Naive thymus-derived CD4-positive, alpha-beta T cell (primary cell): ENCODE measurements at regions of chr11 and their contacts with region 1.

Region 1: DNA sequence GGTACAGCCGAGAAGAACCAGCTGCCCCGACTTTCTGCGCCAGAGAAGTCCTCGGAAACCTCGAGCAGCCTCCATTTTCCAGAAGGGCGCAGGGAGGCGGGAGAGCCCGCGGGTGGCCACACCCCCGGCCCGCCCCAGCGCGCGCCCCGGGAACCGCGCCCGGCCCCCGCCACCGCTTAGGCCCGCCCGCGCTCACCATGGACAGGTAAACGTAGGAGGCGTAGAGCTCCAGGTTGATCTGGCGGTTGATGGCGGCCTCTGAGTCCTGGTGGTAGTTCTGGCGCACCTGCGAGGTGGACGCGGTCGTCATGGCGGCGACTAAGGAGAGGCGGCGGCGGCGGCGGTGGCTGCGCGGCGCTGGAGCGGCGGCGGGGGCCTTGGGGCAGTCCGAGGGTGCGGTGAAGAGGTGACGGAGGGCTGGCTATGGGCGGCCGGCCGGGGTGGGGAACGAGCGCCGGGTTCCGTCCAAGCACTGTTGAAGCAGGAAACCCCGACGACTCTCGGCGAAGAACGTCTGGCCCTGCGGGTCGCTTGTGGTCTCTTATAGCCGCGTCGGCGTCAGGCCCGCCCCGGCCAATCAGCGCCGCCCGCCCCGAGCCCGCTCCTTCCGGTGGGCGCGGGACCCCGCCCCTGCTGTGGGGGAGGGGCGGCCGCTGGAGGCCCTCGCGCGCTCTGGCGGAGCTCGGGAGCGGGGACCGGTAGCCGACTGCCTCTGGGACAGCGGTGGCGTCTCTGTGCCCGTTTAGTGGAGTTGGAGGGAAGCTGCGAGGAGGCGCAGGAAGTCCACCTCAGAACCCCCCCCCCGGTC is at the start of gene FTH1:
- DNase-seq: peak; percentile 87 to 96 (median 92)
- ATAC-seq: peak; percentile 81
- H3K4me3 ChIP-seq: peak within 1 kb of the TSS; percentile 91
- H3K4me3 Mint-ChIP-seq: peak within 1 kb of the TSS; percentile 90 to 98 (median 94)
- H3K27ac ChIP-seq: peak within 1 kb of the TSS; percentile 87
- H3K27ac Mint-ChIP-seq: peak within 1 kb of the TSS; percentile 91 to 99 (median 97)
- H3K4me1 ChIP-seq: peaks cover 18 to 38% of the 10 kb centered on the region in 2 donors
- H3K4me1 Mint-ChIP-seq: peaks cover 45 to 78% (median 72%) of the 10 kb centered on the region in 7 donors
- H3K27me3 ChIP-seq: no peaks in the 10 kb centered on the region
- H3K27me3 Mint-ChIP-seq: no peaks in the 10 kb centered on the region
- total RNA-seq, gene FTH1: 684 to 3,858 (median 993) TPM

Region 2: GRCh38 chr11:61460474-61460881 is 506.8 kb before region 1 on chr11:
- CTCF ChIA-PET with region 1: no interaction called
- POLR2A ChIA-PET with region 1: no interaction called
- intact Hi-C with region 1: no loop called
- DNase-seq: no peak
- ATAC-seq: no peak
- H3K4me3 ChIP-seq: no peak overlapping the region
- H3K4me3 Mint-ChIP-seq: no peak overlapping the region
- H3K27ac ChIP-seq: no peak overlapping the region
- H3K27ac Mint-ChIP-seq: no peak overlapping the region
- H3K4me1 ChIP-seq: no peaks in the 10 kb centered on the region
- H3K4me1 Mint-ChIP-seq: peaks cover 0 to 15% (median 4%) of the 10 kb centered on the region in 7 donors
- H3K27me3 ChIP-seq: no peaks in the 10 kb centered on the region
- H3K27me3 Mint-ChIP-seq: no peaks in the 10 kb centered on the region

Region 3: DNA sequence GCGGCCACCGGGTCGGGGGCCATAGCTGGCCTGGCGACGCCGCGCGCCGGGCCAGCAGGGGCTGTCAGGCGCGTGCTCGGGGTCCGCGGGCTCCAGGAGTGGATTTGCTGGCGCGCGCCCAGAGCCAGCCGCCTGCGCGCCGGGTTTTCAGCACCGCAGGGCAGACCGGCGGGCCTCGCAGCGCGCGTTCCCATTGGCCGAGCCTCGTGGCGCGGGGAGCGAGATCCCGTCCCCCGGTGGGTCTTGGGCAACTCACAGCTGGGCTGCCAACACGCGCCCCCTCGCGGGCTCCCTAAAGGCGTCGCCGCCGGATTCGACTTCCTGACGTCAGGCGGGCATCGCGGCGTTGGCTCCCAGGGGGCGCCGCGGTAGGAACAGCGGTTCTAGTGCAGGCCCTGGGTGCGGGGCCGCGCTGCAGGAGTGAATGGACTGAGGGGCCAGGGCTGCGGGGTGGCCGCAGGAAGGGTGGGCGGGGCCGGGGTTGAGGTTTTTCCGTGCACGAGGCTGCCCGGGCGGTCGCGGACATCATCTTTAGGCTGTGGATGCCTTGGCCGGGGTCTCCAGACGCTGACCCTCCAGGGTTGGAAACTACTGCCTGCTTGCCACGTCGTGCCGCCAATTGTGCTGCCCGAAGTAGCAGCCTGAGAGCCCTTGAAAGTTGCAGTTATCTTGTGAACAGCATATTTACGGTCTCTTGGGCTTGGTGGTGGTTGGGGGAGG is 150.4 kb before region 1 on chr11 and contains the start of gene FADS1:
- CTCF ChIA-PET with region 1: no interaction called
- POLR2A ChIA-PET with region 1: interaction called, 3 read pairs
- intact Hi-C with region 1: loop called in 1 of 2 experiments (anchors 5 kb)
- DNase-seq: peak; percentile 45 to 88 (median 60)
- ATAC-seq: peak; percentile 77
- H3K4me3 ChIP-seq: peak within 1 kb of the TSS; percentile 74
- H3K4me3 Mint-ChIP-seq: peak within 1 kb of the TSS; percentile 84 to 98 (median 92)
- H3K27ac ChIP-seq: peak within 1 kb of the TSS; percentile 51
- H3K27ac Mint-ChIP-seq: peak within 1 kb of the TSS in 5 of 9 donors; percentile 8 to 97 (median 83)
- H3K4me1 ChIP-seq: peaks cover 8 to 12% of the 10 kb centered on the region in 2 donors
- H3K4me1 Mint-ChIP-seq: peaks cover 0 to 24% (median 19%) of the 10 kb centered on the region in 7 donors
- H3K27me3 ChIP-seq: peaks cover 0 to 10% of the 10 kb centered on the region in 2 donors
- H3K27me3 Mint-ChIP-seq: peaks cover 3 to 30% (median 15%) of the 10 kb centered on the region in 5 donors
- total RNA-seq, gene FADS1: 0.62 to 52.1 (median 2.3) TPM

Region 4: DNA sequence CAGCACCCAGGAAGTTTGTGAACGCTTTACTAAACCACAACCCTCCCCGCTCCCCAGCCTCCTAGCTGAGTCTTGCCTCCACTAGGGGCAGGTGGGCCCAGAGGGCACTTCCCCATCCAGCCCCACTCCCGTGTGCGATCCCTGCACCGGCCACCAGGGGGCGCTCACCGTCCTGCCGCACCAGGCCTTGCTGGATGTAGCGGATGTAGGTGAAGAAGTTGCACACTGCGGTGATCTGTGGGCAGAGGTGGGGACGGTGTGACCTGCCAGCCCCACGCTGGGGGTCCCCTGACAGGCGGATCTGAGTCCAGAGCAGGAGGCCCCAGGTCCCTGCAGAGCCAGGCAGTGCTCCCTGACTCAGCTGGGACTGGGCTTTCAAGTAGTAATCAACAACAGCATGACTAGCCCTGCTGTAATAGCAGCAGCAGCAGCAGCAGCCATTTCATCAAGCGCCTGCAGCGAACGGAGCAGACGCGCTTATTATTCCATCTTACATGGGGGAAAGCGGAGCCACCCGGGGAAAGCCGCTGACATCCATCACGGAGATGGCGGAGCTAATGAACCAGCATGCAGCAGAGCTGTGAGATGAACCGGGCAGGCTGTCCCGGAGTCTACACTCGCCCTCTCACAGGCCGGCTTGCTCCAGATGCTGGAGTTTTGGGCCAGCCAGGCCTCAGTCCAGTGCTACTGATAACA is 68.0 kb before region 1 on chr11:
- CTCF ChIA-PET with region 1: no interaction called
- POLR2A ChIA-PET with region 1: interaction called, 5 read pairs
- intact Hi-C with region 1: loop called (anchors 2 to 5 kb)
- DNase-seq: peak; percentile 88 to 98 (median 93)
- ATAC-seq: peak; percentile 98
- H3K4me3 ChIP-seq: no peak overlapping the region
- H3K4me3 Mint-ChIP-seq: no peak overlapping the region
- H3K27ac ChIP-seq: no peak overlapping the region
- H3K27ac Mint-ChIP-seq: peak overlapping the region; percentile 55 to 93 (median 69)
- H3K4me1 ChIP-seq: peaks cover 4% of the 10 kb centered on the region in 2 donors
- H3K4me1 Mint-ChIP-seq: peaks cover 4 to 7% (median 5%) of the 10 kb centered on the region in 7 donors
- H3K27me3 ChIP-seq: no peaks in the 10 kb centered on the region
- H3K27me3 Mint-ChIP-seq: peaks cover 0 to 4% (median 0%) of the 10 kb centered on the region in 5 donors

Region 5: GRCh38 chr11:62025487-62026105 is 58.3 kb after region 1 on chr11:
- CTCF ChIA-PET with region 1: interaction called, 3 read pairs
- POLR2A ChIA-PET with region 1: interaction called, 145 read pairs
- intact Hi-C with region 1: loop called (anchors 1 kb)
- DNase-seq: peak; percentile 45 to 97 (median 93)
- ATAC-seq: peak; percentile 91
- H3K4me3 ChIP-seq: peak overlapping the region; percentile 11
- H3K4me3 Mint-ChIP-seq: peak overlapping the region; percentile 68 to 84 (median 76)
- H3K27ac ChIP-seq: peak overlapping the region; percentile 93
- H3K27ac Mint-ChIP-seq: peak overlapping the region; percentile 95 to 100 (median 99)
- H3K4me1 ChIP-seq: peaks cover 9 to 17% of the 10 kb centered on the region in 2 donors
- H3K4me1 Mint-ChIP-seq: peaks cover 6 to 28% (median 24%) of the 10 kb centered on the region in 7 donors
- H3K27me3 ChIP-seq: no peaks in the 10 kb centered on the region
- H3K27me3 Mint-ChIP-seq: no peaks in the 10 kb centered on the region

Region 6: DNA sequence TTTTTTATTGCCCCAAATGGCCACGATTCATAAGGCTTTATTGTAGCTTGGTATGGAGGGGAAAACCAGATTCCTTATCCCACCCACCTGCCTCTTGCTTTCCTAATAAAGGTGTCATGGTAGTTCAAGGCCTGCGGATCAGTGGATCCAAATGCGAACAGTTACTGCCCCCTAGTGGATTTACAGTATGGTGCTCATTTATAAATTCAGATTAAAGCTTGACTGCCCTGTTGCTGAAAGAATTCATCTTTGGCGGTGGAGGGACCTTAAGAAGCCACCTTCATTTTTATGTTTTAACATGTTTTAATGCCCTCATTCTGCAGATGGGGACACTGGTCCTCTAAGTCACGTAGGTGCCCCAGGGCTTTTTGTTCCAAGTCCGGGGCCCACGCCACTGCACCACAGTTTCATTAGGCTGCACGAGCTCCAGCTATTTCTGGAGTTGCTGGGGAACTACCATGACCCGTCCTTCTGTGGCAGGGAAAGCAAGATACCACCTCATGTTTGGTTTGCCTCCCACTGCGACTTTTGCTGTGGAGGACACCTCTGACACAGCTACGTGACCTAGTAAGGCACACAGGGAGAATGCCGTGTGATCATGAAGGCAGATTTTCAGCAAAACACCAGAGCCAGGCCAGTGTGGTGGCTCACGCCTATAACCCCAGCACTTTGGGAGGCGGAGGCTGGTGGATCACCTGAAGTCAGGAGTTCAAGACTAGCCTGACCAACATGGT is 140.9 kb after region 1 on chr11:
- CTCF ChIA-PET with region 1: interaction called, 8 read pairs
- POLR2A ChIA-PET with region 1: interaction called, 4 read pairs
- intact Hi-C with region 1: loop called in 1 of 2 experiments (anchors 5 kb)
- DNase-seq: peak in 7 of 9 donors; percentile 56 to 76 (median 69)
- ATAC-seq: peak; percentile 78
- H3K4me3 ChIP-seq: no peak overlapping the region
- H3K4me3 Mint-ChIP-seq: peak overlapping the region in 1 of 10 donors; percentile 38
- H3K27ac ChIP-seq: no peak overlapping the region
- H3K27ac Mint-ChIP-seq: peak overlapping the region in 3 of 9 donors; percentile 48 to 81 (median 80)
- H3K4me1 ChIP-seq: peaks cover 6 to 7% of the 10 kb centered on the region in 2 donors
- H3K4me1 Mint-ChIP-seq: peaks cover 6 to 27% (median 16%) of the 10 kb centered on the region in 7 donors
- H3K27me3 ChIP-seq: no peaks in the 10 kb centered on the region
- H3K27me3 Mint-ChIP-seq: peaks cover 0 to 15% (median 4%) of the 10 kb centered on the region in 5 donors

Region 7: DNA sequence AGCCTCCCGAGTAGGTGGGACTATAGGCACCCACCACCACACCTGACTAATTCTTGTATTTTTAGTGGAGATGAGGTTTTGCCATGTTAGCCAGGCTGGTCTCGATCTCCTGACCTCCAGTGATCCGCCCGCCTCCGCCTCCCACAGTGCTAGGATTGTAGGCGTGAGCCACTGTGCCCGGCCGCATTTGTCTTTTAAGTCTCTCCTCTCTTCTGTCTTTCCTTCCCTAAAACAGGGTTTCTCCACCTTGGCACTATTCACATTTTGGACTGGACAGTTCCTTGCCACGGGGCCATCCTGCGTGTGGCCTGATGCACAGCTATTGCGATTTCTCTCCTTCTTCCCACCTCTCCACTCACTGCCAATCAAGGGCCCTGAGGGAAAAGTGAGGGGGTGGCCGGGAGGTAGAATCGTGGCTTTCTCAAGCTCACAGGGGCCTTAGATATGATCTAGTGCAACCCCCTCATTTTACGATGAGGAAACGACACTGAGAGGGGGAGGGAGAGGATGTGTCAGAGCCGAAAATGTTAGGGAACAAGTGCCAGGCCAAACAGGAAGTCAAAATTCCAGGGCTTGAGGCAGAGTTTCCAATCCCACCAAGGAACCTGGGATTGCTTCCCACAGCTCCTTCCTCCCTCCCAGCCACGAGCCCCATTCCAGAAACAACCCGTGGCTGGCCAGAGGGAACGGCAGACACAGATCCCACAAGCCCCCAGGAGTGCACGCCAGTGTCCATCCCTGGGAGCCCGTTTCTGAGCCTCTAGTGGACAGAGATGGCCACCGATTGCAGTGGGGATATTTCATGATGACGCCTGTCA is 472.7 kb after region 1 on chr11:
- CTCF ChIA-PET with region 1: no interaction called
- POLR2A ChIA-PET with region 1: no interaction called
- intact Hi-C with region 1: no loop called
- DNase-seq: no peak
- ATAC-seq: no peak
- H3K4me3 ChIP-seq: no peak overlapping the region
- H3K4me3 Mint-ChIP-seq: no peak overlapping the region
- H3K27ac ChIP-seq: no peak overlapping the region
- H3K27ac Mint-ChIP-seq: no peak overlapping the region
- H3K4me1 ChIP-seq: peaks cover 0 to 19% of the 10 kb centered on the region in 2 donors
- H3K4me1 Mint-ChIP-seq: peaks cover 11 to 27% (median 19%) of the 10 kb centered on the region in 7 donors
- H3K27me3 ChIP-seq: no peaks in the 10 kb centered on the region
- H3K27me3 Mint-ChIP-seq: peaks cover 0 to 6% (median 4%) of the 10 kb centered on the region in 5 donors

Region 8: DNA sequence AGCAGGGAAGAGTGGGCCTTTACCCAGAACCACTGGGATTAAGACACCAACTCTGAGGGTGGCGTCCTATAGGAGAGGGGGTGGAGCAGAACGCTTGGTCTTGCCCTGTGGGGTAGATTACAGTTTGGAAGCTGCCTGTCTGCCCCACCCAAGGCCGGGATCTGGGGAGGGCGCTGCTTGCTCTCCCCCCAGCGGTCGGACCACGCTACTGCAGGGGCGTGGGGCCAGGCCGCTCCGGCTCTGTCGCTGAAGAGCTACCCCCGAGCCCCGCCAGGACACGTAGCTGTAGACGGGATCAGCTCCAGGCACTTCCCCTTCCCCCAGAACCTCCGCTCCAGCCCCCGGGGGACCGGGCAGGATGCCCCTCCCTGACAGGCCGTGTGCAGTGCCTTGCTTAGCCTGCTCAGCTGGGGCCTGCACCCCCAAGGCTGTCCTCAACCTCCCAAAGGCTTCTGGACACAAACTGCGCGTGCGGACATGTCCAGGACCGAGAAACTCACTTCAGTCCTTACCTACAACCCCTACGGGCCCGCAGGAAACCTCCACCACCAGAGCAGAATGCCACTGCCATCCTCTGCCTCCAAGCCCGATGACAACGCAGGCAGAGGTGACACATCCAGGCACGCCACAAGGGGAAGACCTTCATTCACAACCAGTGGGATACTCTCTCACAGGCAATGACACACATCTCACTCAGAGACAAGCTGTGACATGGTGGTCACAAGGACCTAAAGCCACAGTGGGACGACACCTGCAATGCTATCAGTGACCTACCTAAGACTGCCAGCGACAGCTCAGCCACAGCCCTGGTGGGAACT is 575.6 kb after region 1 on chr11:
- CTCF ChIA-PET with region 1: no interaction called
- POLR2A ChIA-PET with region 1: no interaction called
- intact Hi-C with region 1: loop called in 1 of 2 experiments (anchors 5 kb)
- DNase-seq: peak; percentile 37 to 84 (median 66)
- ATAC-seq: peak; percentile 61
- H3K4me3 ChIP-seq: peak overlapping the region; percentile 87
- H3K4me3 Mint-ChIP-seq: peak overlapping the region; percentile 48 to 100 (median 75)
- H3K27ac ChIP-seq: peak overlapping the region; percentile 84
- H3K27ac Mint-ChIP-seq: peak overlapping the region; percentile 2 to 95 (median 70)
- H3K4me1 ChIP-seq: peaks cover 39 to 56% of the 10 kb centered on the region in 2 donors
- H3K4me1 Mint-ChIP-seq: peaks cover 36 to 82% (median 63%) of the 10 kb centered on the region in 7 donors
- H3K27me3 ChIP-seq: no peaks in the 10 kb centered on the region
- H3K27me3 Mint-ChIP-seq: peaks cover 0 to 5% (median 0%) of the 10 kb centered on the region in 5 donors